Naive thymus-derived CD8-positive, alpha-beta T cell (primary cell): ENCODE measurements at regions of chr5 and their contacts with region 1.

Region 1: DNA sequence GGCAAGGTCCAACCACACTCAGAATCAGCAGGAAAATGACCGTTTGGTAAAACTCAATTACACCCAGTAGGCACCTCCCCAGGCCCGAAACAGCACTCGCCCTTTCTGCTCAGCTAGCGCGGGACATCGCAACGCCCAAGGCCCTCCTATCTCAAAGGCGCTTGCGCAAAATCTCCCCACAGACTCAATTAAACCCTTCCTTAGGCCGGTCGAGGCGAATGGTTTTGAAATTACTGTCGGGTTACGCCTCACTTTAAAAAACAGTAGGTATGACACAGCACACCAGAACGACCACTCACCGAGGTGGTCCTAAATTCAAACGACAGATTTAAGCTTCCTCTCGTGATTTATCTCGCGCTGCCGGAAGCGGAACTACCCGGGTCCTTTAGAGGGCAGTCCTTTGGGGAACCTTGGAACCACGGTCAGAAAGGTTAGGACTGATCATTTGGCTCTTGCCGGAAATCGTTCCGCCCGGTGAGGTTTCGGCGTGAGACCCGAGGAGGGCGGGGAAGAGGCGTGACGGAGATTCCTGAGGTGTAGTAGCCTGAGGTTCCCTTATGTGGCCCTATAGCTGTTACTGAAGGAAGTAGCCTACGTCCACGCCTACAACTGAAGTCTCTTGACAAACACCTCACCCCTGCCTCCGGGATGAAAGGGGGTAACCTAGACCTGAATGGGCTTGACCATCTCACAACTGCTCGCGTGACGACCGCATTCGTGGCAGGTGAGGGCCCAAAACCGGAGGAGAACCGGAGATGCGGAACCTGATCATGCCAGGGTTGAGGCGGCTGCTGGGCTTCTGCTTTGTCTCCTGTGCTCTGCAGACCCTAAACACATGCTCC is at the starts of genes GIN1 and PPIP5K2:
- DNase-seq: peak; percentile 82 to 99 (median 96)
- ATAC-seq: peak; percentile 89 to 92
- H3K4me3 Mint-ChIP-seq: peak within 1 kb of the TSS; percentile 91 to 100 (median 98)
- H3K27ac Mint-ChIP-seq: peak within 1 kb of the TSS; percentile 93 to 100 (median 99)
- H3K4me1 Mint-ChIP-seq: peaks cover 22 to 62% (median 54%) of the 10 kb centered on the region in 4 donors
- H3K27me3 Mint-ChIP-seq: no peaks in the 10 kb centered on the region
- polyA plus RNA-seq, gene GIN1: 6.5 to 9.5 (median 8.1) TPM
- polyA plus RNA-seq, gene PPIP5K2: 19.9 to 21.4 (median 20.7) TPM

Region 2: DNA sequence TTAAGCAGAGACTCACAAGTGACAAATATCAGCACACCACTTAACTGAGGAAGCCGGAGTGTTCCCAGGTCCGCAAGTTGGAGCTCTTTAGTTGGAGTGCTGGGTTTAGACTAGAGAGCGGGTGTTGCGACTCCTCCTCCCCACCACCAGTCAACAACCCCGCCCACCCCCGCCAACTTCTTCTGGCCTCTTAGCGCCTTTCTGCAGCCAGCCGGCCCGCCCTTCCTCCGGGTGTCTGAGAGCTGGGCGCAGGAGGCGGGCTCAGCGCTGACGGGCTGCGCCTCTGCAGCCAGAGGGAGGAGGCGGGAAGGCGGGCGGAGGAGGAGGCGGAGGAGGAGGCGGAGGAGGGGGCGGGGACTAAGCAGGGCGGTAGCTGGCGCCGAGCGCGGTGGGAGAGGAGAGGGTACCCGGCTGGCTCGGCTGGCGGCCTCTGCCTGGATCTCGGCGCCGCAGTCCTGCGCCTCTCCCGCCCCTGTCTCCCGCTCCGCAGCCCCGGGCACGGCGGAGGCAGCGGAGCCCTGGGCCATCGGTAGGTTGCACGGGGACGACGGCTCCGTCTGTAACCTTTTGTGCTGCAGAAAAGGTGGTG is 138.5 kb after region 1 on chr5 and contains the start of gene MACIR:
- POLR2A ChIA-PET with region 1: interaction called, 20 read pairs
- DNase-seq: peak; percentile 82 to 96 (median 90)
- ATAC-seq: peak; percentile 88 to 91
- H3K4me3 Mint-ChIP-seq: peak within 1 kb of the TSS; percentile 81 to 92 (median 86)
- H3K27ac Mint-ChIP-seq: peak within 1 kb of the TSS; percentile 55 to 92 (median 88)
- H3K4me1 Mint-ChIP-seq: peaks cover 7 to 22% (median 15%) of the 10 kb centered on the region in 4 donors
- H3K27me3 Mint-ChIP-seq: peaks cover 3 to 20% (median 9%) of the 10 kb centered on the region in 5 donors
- polyA plus RNA-seq, gene MACIR: 0.76 to 1.2 (median 0.82) TPM